Psoas muscle (tissue), 8 donors: ENCODE measurements at regions of chr2 and their contacts with region 1.

Region 1: GRCh38 chr2:171347591-171348032 is 86.2 kb downstream of the METTL8 start:
- DNase-seq: no peak
- ATAC-seq: peak; percentile 61 to 84 (median 78)
- H3K4me3 ChIP-seq: no peak overlapping the region
- H3K27ac ChIP-seq: peak overlapping the region; percentile 63
- H3K4me1 ChIP-seq: peaks cover 4% of the 10 kb centered on the region
- H3K27me3 ChIP-seq: no peaks in the 10 kb centered on the region
- CTCF ChIP-seq: no peak

Region 2: DNA sequence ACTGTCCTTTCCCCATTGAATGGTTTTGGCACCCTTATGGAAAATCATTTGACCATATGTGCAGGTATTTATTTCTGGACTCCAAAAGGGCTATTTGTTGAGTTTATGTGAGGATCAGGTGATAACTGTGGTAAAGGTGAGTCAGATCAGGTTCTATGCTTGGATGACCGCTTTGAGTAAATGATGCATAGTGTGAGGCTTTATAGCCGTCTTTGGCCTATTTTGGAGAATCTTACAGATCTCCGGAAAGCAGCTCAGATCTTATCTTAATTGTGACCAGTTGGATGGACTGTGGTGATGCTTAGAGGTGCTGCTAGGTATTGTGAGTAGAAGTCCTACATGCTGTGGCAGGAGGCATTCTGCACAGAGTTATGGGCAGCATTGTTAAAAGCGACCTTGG is 40.1 kb before region 1 on chr2:
- intact Hi-C with region 1: no loop called
- DNase-seq: no peak
- ATAC-seq: no peak
- H3K4me3 ChIP-seq: no peak overlapping the region
- H3K27ac ChIP-seq: no peak overlapping the region
- H3K4me1 ChIP-seq: no peaks in the 10 kb centered on the region
- H3K27me3 ChIP-seq: no peaks in the 10 kb centered on the region
- CTCF ChIP-seq: no peak

Region 3: DNA sequence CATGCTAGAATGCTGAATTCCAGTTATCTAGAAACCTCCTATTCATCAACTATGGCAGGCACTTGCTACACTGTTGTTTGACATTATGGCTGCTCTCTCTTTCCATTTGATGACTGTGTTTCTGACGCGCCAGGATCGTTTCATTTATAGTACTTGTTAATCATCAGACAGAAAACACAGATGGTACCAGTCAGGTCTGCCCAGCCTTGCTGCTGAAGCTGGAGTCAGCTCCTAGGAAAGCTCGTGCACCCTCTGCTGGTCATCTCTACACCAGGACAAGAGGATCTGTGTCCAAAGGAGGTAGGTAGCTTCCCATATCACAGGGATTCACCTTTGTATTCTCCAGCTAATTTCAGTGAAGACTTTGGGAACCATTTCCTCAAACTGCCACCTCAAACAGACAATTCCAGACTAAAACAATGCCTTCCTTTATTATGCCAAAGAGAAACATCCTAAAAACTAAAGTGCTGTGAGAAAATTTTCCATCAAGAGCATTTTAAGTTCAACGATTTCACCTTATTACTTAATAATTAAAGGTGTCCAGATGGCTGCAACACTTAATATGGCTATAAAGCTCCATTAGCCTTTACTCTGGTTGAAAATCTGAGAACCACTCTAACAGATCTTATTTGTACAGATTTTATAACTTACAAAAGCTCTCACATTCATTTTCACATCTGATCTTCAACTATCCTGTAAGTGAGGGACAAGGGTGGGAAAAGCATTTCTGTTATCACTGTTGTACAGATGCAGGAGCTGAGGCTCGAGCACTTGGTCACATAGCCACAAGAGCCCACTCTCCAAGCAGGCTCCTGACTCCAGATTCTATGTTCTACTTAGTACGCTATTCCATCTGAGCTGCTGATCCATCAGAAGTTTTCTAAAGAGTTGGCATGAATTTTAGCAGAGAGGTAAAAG is 68.7 kb after region 1 on chr2:
- intact Hi-C with region 1: loop called (anchors 5 to 10 kb)
- DNase-seq: peak; percentile 79 to 88
- ATAC-seq: peak; percentile 97 to 100 (median 98)
- H3K4me3 ChIP-seq: no peak overlapping the region
- H3K27ac ChIP-seq: peak overlapping the region; percentile 48
- H3K4me1 ChIP-seq: peaks cover 5% of the 10 kb centered on the region
- H3K27me3 ChIP-seq: no peaks in the 10 kb centered on the region
- CTCF ChIP-seq: peak; percentile 80